ENCODE measurements at regions of chr1 and their contacts with region 1.

Region 1: GRCh38 chr1:37553927-37554808 is at the start of gene SNIP1:
- DNase-seq: peak; percentile 91 to 94 (median 93)
- H3K4me3 ChIP-seq: peak within 1 kb of the TSS; percentile 80 to 100 (median 80)
- H3K4me3 Mint-ChIP-seq: peak within 1 kb of the TSS; percentile 92 to 96
- H3K27ac ChIP-seq: peak within 1 kb of the TSS; percentile 79 to 98
- H3K27ac Mint-ChIP-seq: peak within 1 kb of the TSS; percentile 88 to 98 (median 96)
- H3K4me1 ChIP-seq: peaks cover 11 to 26% of the 10 kb centered on the region in 2 donors
- H3K4me1 Mint-ChIP-seq: peaks cover 24% of the 10 kb centered on the region
- H3K27me3 ChIP-seq: no peaks in the 10 kb centered on the region
- H3K27me3 Mint-ChIP-seq: no peaks in the 10 kb centered on the region
- CTCF ChIP-seq: no peak
- polyA plus RNA-seq, gene SNIP1: 1.6 to 6.8 (median 3.3) TPM

Region 2: DNA sequence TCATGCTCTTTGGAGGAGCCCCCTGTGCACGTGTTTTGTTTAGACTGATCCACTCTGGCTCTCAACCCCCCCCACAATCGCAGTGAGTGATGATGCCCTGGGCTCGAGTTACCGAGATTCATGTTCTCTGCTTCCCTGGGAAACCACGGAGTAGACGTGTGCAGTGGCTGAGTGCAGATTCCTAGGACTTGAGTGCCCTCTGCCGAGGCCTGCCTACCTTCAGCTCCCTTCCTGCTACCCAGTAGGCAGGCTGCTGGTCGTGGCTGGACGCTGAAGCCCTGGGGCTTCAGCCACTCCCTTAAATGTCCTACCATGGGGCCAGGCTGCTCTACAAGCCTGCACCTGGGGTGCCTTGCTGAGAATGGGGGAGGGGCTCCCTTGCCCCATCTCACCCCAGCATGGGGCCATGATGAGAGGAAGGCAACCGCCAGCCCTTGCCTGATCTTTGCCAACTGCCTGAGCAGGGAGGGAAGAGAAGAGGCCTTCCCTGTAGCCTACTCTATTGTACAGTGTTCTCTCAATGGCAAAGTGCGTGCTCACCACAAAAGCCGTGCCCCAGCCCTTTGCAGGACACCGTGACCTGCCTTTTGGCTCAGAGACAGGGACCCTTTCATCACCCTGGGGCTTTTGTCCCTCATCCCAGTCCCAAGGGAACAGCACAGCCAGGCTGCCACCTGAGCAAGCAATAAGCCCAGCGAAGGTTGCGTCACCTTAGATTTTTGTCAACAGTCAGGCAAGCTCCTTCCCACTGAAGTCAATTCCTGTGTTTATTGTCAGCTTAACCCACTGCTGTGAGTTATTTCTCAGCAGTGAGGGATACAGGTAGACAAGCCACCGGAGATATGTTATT is 515.7 kb before region 1 on chr1:
- intact Hi-C with region 1: no loop called
- DNase-seq: no peak
- H3K4me3 ChIP-seq: no peak overlapping the region
- H3K4me3 Mint-ChIP-seq: peak overlapping the region in 1 of 2 donors; percentile 33
- H3K27ac ChIP-seq: no peak overlapping the region
- H3K27ac Mint-ChIP-seq: no peak overlapping the region
- H3K4me1 ChIP-seq: no peaks in the 10 kb centered on the region
- H3K4me1 Mint-ChIP-seq: peaks cover 8% of the 10 kb centered on the region
- H3K27me3 ChIP-seq: peaks cover 27 to 63% of the 10 kb centered on the region in 2 donors
- H3K27me3 Mint-ChIP-seq: peaks cover 66 to 71% (median 69%) of the 10 kb centered on the region in 3 donors
- CTCF ChIP-seq: no peak

Region 3: GRCh38 chr1:37486680-37487618 is 67.2 kb before region 1 on chr1:
- intact Hi-C with region 1: no loop called
- DNase-seq: peak; percentile 59 to 77 (median 65)
- H3K4me3 ChIP-seq: peak overlapping the region in 1 of 3 experiments; percentile 46
- H3K4me3 Mint-ChIP-seq: peak overlapping the region in 1 of 2 donors; percentile 63
- H3K27ac ChIP-seq: peak overlapping the region; percentile 81 to 85
- H3K27ac Mint-ChIP-seq: peak overlapping the region; percentile 90 to 96 (median 93)
- H3K4me1 ChIP-seq: peaks cover 29 to 34% of the 10 kb centered on the region in 2 donors
- H3K4me1 Mint-ChIP-seq: peaks cover 29% of the 10 kb centered on the region
- H3K27me3 ChIP-seq: no peaks in the 10 kb centered on the region
- H3K27me3 Mint-ChIP-seq: no peaks in the 10 kb centered on the region
- CTCF ChIP-seq: peak; percentile 98

Region 4: DNA sequence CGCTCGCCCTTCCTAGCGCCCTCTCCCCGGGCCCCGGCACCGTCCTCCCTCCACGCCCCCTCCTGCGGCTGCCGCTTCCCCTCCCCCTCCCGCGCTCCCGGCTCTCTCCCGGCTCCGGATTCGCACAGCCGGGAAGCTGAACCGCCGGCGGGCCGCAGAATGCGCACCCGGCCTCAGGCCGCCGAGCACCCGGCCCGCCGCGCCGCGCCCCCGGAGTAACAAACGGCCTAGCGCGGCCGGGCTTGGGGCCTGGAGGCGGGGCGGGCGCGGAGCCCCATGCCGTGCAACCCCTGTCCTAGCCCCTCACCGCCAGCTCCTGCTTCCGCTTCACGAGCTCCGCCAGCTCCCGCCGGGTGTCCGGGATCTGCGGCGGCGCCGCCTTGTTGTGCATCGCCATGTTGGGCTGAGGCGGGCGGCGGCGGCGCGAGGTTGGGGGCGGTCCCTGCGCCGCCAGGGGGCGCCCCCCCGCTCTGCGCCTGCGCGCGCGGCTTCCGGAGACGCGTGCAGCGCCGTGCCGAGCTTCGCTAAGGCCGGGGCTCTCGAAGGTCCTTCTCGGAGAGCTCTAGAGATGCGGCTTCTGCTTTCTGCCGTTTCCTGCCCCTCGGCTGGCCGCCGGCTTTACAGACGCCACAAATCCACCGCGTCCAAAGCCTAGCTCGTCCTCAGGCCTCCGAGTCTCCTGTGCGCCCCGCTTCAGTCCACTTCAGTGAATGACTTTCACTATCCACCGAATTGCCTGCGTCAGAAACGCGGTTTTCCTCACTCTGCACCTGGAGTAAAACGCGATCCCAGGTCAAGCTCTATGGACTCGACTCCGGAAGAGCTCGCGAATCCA is 39.6 kb before region 1 on chr1 and contains the start of gene MEAF6:
- intact Hi-C with region 1: loop called in 1 of 2 experiments (anchors 5 kb)
- DNase-seq: peak; percentile 79 to 89 (median 87)
- H3K4me3 ChIP-seq: peak within 1 kb of the TSS; percentile 57 to 90 (median 83)
- H3K4me3 Mint-ChIP-seq: peak within 1 kb of the TSS; percentile 96 to 98
- H3K27ac ChIP-seq: peak within 1 kb of the TSS; percentile 95 to 96
- H3K27ac Mint-ChIP-seq: peak within 1 kb of the TSS; percentile 94 to 99 (median 98)
- H3K4me1 ChIP-seq: peaks cover 17 to 21% of the 10 kb centered on the region in 2 donors
- H3K4me1 Mint-ChIP-seq: peaks cover 23% of the 10 kb centered on the region
- H3K27me3 ChIP-seq: no peaks in the 10 kb centered on the region
- H3K27me3 Mint-ChIP-seq: peaks cover 1 to 4% (median 2%) of the 10 kb centered on the region in 3 donors
- CTCF ChIP-seq: peak; percentile 95
- polyA plus RNA-seq, gene MEAF6: 56.7 to 99.8 (median 79.2) TPM

Region 5: GRCh38 chr1:38012363-38013226 is 458.4 kb after region 1 on chr1 and contains the start of gene UTP11:
- intact Hi-C with region 1: loop called in 1 of 2 experiments (anchors 10 kb)
- DNase-seq: peak; percentile 96 to 100 (median 99)
- H3K4me3 ChIP-seq: peak within 1 kb of the TSS; percentile 81 to 84 (median 83)
- H3K4me3 Mint-ChIP-seq: peak within 1 kb of the TSS; percentile 97 to 99
- H3K27ac ChIP-seq: peak within 1 kb of the TSS; percentile 86 to 92
- H3K27ac Mint-ChIP-seq: peak within 1 kb of the TSS; percentile 96 to 99 (median 97)
- H3K4me1 ChIP-seq: peaks cover 38 to 46% of the 10 kb centered on the region in 2 donors
- H3K4me1 Mint-ChIP-seq: peaks cover 36% of the 10 kb centered on the region
- H3K27me3 ChIP-seq: no peaks in the 10 kb centered on the region
- H3K27me3 Mint-ChIP-seq: peaks cover 0 to 2% (median 0%) of the 10 kb centered on the region in 3 donors
- CTCF ChIP-seq: no peak
- polyA plus RNA-seq, gene UTP11: 10.9 to 26.0 (median 20.5) TPM

Measured in CD14-positive monocyte (primary cell).